CD4-positive, alpha-beta memory T cell (primary cell): ENCODE measurements at regions of chr17 and their contacts with region 1.

Region 1: DNA sequence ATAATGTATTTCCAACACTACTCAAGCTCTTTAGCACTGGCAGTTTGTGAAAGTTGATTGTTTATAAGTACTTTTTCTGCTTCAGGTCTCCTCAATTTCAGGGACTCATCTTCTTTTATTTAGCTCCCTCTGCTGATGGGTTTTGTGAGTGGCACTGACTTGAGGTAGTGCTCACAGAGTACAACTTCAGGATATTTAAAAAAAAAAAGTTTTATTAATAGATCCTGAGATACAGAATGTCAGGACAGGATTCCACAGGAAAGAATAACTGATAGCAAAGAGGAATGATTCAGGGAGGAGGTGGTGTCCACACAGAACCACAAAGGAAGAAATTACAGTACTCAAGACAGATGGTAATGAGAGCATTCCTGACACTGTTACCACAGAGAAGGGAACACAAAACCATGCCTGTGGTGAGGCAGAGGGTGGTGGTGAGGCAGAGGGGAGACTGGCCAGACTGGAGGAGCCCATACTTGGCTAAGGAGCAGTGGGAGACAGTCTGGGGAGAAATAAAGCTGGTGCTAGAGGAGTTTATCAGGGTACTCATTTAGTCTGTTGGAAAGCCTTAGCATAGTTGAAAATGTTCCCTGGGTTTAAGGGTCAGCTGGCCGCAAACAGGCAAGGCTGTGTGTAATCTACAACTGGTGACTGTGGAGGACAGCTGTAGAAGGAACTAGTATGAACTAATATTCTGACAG is 63.7 kb downstream of the SPAG9 start:
- DNase-seq: peak; percentile 31 to 49 (median 43)
- H3K4me3 ChIP-seq: no peak overlapping the region
- H3K4me3 Mint-ChIP-seq: no peak overlapping the region
- H3K27ac ChIP-seq: no peak overlapping the region
- H3K27ac Mint-ChIP-seq: peak overlapping the region in 1 of 7 donors; percentile 19
- H3K4me1 ChIP-seq: no peaks in the 10 kb centered on the region
- H3K4me1 Mint-ChIP-seq: peaks cover 6 to 22% (median 13%) of the 10 kb centered on the region in 4 donors
- H3K27me3 ChIP-seq: no peaks in the 10 kb centered on the region
- H3K27me3 Mint-ChIP-seq: no peaks in the 10 kb centered on the region

Region 2: DNA sequence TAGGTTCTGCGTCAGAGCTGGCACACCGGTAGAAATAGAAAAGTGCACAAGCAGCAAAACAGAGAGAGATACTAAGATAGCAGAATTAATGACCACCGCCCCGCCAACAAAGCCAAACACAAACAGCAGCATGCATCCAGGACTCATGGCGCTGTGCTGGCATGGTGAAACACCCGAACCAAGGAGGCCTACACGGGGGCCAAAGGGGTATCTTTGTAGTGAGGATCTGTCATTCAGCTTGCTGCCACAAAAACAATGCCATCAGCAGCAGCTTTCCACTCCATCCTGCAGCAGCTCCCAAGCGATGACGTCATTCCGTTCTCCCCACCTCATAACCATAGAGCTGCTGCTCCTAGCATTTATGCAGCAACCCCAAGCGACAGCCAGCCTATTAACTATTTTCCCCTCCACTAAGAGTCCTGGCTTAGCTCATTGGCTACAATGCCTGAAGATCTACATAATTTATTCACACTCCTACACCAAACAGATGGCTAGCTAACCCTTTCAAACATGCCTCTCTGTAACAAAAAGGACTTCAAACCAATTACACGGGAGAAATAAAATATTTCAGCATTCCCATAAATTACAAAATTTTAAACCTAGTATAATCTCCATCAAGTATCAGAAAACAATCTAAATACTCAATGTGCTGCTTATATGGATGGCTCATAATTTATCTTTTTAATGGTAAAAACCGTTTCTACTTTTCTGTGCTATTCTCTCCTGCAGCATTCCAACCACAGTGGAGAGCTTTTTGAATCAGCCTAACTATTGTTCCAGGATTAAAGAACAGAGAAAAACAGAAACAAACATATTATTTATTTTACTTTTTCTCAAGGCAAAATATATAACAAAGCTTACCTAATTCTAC is 10.2 kb before region 1 on chr17:
- CTCF ChIA-PET with region 1: interaction called, 10 read pairs
- POLR2A ChIA-PET with region 1: interaction called, 3 read pairs
- intact Hi-C with region 1: no loop called
- DNase-seq: no peak
- H3K4me3 ChIP-seq: no peak overlapping the region
- H3K4me3 Mint-ChIP-seq: no peak overlapping the region
- H3K27ac ChIP-seq: no peak overlapping the region
- H3K27ac Mint-ChIP-seq: no peak overlapping the region
- H3K4me1 ChIP-seq: peaks cover 14% of the 10 kb centered on the region
- H3K4me1 Mint-ChIP-seq: peaks cover 0 to 9% (median 5%) of the 10 kb centered on the region in 4 donors
- H3K27me3 ChIP-seq: no peaks in the 10 kb centered on the region
- H3K27me3 Mint-ChIP-seq: no peaks in the 10 kb centered on the region